Activated CD4-positive, alpha-beta memory T cell treated with anti-CD3 and anti-CD28 coated beads, Interleukin-2, amount 10 ng/mL, durations not matched to agents 7 days and 5 days (primary cell): ENCODE measurements at regions of chr9 and their contacts with region 1.

Region 1: GRCh38 chr9:33748633-33749304 is 46.6 kb upstream of the PRSS3 start:
- DNase-seq: peak; percentile 75
- H3K4me3 Mint-ChIP-seq: peak overlapping the region; percentile 69
- H3K27ac Mint-ChIP-seq: peak overlapping the region; percentile 66
- H3K4me1 Mint-ChIP-seq: peaks cover 35% of the 10 kb centered on the region
- H3K27me3 Mint-ChIP-seq: peaks cover 78% of the 10 kb centered on the region

Region 2: GRCh38 chr9:33762343-33762742 is 13.6 kb after region 1 on chr9:
- CTCF ChIA-PET with region 1: no interaction called
- POLR2A ChIA-PET with region 1: no interaction called
- DNase-seq: no peak
- H3K4me3 Mint-ChIP-seq: no peak overlapping the region
- H3K27ac Mint-ChIP-seq: no peak overlapping the region
- H3K4me1 Mint-ChIP-seq: peaks cover 5% of the 10 kb centered on the region
- H3K27me3 Mint-ChIP-seq: peaks cover 15% of the 10 kb centered on the region

Region 3: GRCh38 chr9:33778700-33779351 is 30.1 kb after region 1 on chr9:
- CTCF ChIA-PET with region 1: interaction called, 15 read pairs
- POLR2A ChIA-PET with region 1: no interaction called
- DNase-seq: peak; percentile 54
- H3K4me3 Mint-ChIP-seq: no peak overlapping the region
- H3K27ac Mint-ChIP-seq: no peak overlapping the region
- H3K4me1 Mint-ChIP-seq: no peaks in the 10 kb centered on the region
- H3K27me3 Mint-ChIP-seq: peaks cover 35% of the 10 kb centered on the region